ENCODE measurements at regions of chr2 and their contacts with region 1.

Region 1: DNA sequence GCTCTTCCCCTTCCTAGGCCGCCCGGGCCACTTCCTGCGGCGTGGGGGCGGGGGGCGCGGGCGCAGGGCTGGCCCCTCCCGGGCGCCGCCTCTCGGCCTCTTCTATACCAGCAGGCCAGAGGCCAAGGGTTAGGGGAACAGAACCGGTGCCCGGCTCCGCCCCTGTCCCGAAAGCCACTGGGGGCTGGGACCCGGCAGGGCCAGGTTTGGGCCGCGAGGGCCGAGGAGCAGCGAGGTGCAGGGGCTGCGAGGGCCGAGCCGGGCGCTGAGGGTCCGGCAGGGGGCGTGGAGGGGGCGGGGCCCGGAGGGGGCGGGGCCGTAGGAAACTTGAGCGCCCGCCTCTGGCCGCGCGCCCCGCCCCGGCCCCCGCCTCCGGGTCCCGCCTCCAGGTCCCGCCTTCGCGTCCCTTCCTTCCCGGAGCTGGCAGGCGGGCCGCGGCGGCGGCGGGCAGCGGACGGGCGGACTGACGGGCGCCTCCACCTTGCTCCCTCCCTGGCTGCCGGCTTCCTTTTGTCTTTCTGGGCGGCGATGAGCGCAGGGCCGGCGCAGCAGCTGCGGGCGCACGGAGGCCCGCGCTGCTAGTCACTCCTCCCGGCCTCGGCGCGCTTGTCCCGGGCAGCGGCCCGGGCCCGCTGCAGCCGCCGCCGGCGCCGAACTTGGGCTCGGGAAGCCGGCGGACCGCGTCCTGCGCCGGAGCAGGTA is at the start of gene HPCAL1:
- DNase-seq: peak; percentile 88 to 94 (median 91)
- ATAC-seq: peak; percentile 68 to 94 (median 91)
- H3K4me3 ChIP-seq: peak within 1 kb of the TSS; percentile 57 to 96 (median 89)
- H3K27ac ChIP-seq: peak within 1 kb of the TSS; percentile 49 to 90 (median 82)
- H3K4me1 ChIP-seq: peaks cover 2 to 62% (median 38%) of the 10 kb centered on the region in 12 donors
- H3K27me3 ChIP-seq: no peaks in the 10 kb centered on the region
- CTCF ChIP-seq: peak; percentile 43 to 91 (median 72)
- POLR2A ChIP-seq: peak; percentile 83 to 96
- total RNA-seq, gene HPCAL1: 18.9 to 63.2 (median 40.5) TPM

Region 2: GRCh38 chr2:10122386-10123280 is 180.0 kb before region 1 on chr2 and contains the start of gene RRM2:
- intact Hi-C with region 1: loop called in 5 of 10 experiments (anchors 5 to 10 kb)
- DNase-seq: peak; percentile 92 to 96 (median 94)
- ATAC-seq: peak; percentile 90 to 94 (median 93)
- H3K4me3 ChIP-seq: peak within 1 kb of the TSS; percentile 35 to 79 (median 54)
- H3K27ac ChIP-seq: no peak within 1 kb of the TSS
- H3K4me1 ChIP-seq: peaks cover 10 to 66% (median 21%) of the 10 kb centered on the region in 12 donors
- H3K27me3 ChIP-seq: peaks cover 8 to 24% (median 12%) of the 10 kb centered on the region in 9 donors
- CTCF ChIP-seq: peak in 2 of 12 donors; percentile 8 to 11
- POLR2A ChIP-seq: no peak
- total RNA-seq, gene RRM2: 0.09 to 32.6 (median 1.3) TPM in 8 of 9 donors, not detected in the other

Region 3: GRCh38 chr2:10141736-10142642 is 160.6 kb before region 1 on chr2:
- intact Hi-C with region 1: loop called in 2 of 10 experiments (anchors 10 kb)
- DNase-seq: no peak
- ATAC-seq: peak in 3 of 4 donors; percentile 36 to 48 (median 47)
- H3K4me3 ChIP-seq: no peak overlapping the region
- H3K27ac ChIP-seq: no peak overlapping the region
- H3K4me1 ChIP-seq: peaks cover 0 to 15% (median 9%) of the 10 kb centered on the region in 12 donors
- H3K27me3 ChIP-seq: no peaks in the 10 kb centered on the region
- CTCF ChIP-seq: peak; percentile 24 to 65 (median 48)
- POLR2A ChIP-seq: no peak

Region 4: GRCh38 chr2:10162586-10163497 is 139.8 kb before region 1 on chr2:
- intact Hi-C with region 1: loop called in 1 of 10 experiments (anchors 5 kb)
- DNase-seq: peak in 1 of 5 donors; percentile 41
- ATAC-seq: peak in 3 of 4 donors; percentile 36 to 66 (median 40)
- H3K4me3 ChIP-seq: no peak overlapping the region
- H3K27ac ChIP-seq: no peak overlapping the region
- H3K4me1 ChIP-seq: peaks cover 0 to 11% (median 2%) of the 10 kb centered on the region in 12 donors
- H3K27me3 ChIP-seq: no peaks in the 10 kb centered on the region
- CTCF ChIP-seq: peak in 5 of 12 donors; percentile 13 to 26 (median 22)
- POLR2A ChIP-seq: no peak

Region 5: DNA sequence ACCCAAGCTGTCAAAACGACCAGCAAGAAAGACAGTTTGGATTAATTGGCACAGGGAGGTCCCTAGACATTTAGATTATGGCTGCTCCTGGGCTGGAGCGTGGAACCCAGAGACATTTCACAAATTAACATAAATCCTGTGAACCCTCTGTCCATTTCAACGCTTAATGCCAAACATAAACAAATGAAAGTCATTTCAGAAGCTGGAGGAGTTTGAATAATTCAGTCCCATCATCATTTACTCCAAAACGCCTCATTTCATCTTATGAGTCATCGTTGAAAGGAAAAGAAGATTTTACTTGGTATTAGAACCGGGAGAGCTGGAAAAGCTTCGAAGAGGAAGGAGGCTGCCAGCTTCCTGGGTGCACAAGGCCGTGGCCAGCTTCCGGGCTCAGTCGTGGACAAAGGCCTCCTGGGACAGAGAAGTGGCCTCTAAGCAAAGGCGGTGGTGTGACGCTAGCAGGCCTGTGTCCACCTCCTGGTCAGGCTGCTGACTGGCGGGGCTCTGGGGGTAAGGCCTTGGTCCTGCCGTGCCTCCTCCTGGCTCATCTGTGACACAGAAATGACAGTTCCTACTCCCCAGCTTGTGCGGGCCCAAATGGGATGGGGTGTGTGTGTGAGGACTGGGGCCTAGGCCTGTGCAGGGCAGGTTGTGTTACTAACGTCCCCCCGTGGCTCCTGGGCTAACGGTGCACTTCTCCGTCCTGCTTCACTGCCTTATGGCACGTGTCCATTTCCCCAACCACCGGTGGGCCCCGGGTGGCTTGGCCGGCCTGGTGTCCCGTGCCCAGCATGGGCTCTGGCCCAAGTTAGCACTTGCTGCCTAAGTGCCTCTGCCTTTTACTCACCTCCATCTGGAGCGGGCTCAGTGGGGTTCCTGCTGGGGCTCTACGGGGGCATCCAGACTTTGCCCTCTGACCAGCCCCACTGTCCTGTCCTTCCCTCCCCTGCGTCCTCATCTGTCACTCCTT is 108.5 kb before region 1 on chr2:
- intact Hi-C with region 1: no loop called
- DNase-seq: no peak
- ATAC-seq: peak in 1 of 4 donors; percentile 31
- H3K4me3 ChIP-seq: no peak overlapping the region
- H3K27ac ChIP-seq: no peak overlapping the region
- H3K4me1 ChIP-seq: no peaks in the 10 kb centered on the region
- H3K27me3 ChIP-seq: no peaks in the 10 kb centered on the region
- CTCF ChIP-seq: no peak
- POLR2A ChIP-seq: no peak

Region 6: GRCh38 chr2:10239561-10239967 is 63.1 kb before region 1 on chr2:
- intact Hi-C with region 1: loop called in 1 of 10 experiments (anchors 5 kb)
- DNase-seq: peak in 1 of 5 donors; percentile 33
- ATAC-seq: peak in 1 of 4 donors; percentile 7
- H3K4me3 ChIP-seq: no peak overlapping the region
- H3K27ac ChIP-seq: no peak overlapping the region
- H3K4me1 ChIP-seq: peaks cover 0 to 32% (median 22%) of the 10 kb centered on the region in 12 donors
- H3K27me3 ChIP-seq: no peaks in the 10 kb centered on the region
- CTCF ChIP-seq: peak in 2 of 12 donors; percentile 15 to 24
- POLR2A ChIP-seq: no peak

Region 7: DNA sequence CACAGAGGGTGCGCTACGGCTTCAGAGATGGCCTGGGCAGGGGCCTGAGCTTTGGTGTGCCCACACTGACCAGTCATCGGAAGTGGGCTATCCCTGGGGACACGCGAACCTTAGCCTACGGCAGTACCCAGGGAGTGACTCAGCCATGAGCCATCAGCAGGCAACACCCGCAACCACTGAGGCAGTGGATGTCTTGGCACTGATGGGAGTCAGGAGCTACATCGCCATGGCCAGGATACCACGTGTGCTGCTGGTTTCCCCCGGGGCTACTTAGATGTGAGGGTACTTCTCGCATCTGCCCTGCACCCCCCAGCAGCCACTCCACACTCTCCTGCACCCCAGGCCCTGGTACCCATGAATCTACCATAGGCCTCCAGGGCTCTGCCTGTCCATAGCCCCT is 12.7 kb before region 1 on chr2:
- intact Hi-C with region 1: loop called in 1 of 10 experiments (anchors 1 kb)
- DNase-seq: no peak
- ATAC-seq: no peak
- H3K4me3 ChIP-seq: no peak overlapping the region
- H3K27ac ChIP-seq: no peak overlapping the region
- H3K4me1 ChIP-seq: peaks cover 0 to 27% (median 13%) of the 10 kb centered on the region in 12 donors
- H3K27me3 ChIP-seq: no peaks in the 10 kb centered on the region
- CTCF ChIP-seq: no peak
- POLR2A ChIP-seq: no peak

Region 8: GRCh38 chr2:10331027-10331701 is 28.5 kb after region 1 on chr2:
- intact Hi-C with region 1: loop called in 3 of 10 experiments (anchors 2 kb)
- DNase-seq: peak; percentile 56 to 84 (median 78)
- ATAC-seq: peak; percentile 53 to 77 (median 74)
- H3K4me3 ChIP-seq: peak overlapping the region in 9 of 12 donors; percentile 11 to 50 (median 35)
- H3K27ac ChIP-seq: peak overlapping the region in 11 of 12 donors; percentile 17 to 79 (median 57)
- H3K4me1 ChIP-seq: peaks cover 6 to 72% (median 43%) of the 10 kb centered on the region in 12 donors
- H3K27me3 ChIP-seq: no peaks in the 10 kb centered on the region
- CTCF ChIP-seq: peak in 1 of 12 donors; percentile 15
- POLR2A ChIP-seq: no peak